Prostate gland (tissue), 2 donors: ENCODE measurements at regions of chr1 and their contacts with region 1.

Region 1: DNA sequence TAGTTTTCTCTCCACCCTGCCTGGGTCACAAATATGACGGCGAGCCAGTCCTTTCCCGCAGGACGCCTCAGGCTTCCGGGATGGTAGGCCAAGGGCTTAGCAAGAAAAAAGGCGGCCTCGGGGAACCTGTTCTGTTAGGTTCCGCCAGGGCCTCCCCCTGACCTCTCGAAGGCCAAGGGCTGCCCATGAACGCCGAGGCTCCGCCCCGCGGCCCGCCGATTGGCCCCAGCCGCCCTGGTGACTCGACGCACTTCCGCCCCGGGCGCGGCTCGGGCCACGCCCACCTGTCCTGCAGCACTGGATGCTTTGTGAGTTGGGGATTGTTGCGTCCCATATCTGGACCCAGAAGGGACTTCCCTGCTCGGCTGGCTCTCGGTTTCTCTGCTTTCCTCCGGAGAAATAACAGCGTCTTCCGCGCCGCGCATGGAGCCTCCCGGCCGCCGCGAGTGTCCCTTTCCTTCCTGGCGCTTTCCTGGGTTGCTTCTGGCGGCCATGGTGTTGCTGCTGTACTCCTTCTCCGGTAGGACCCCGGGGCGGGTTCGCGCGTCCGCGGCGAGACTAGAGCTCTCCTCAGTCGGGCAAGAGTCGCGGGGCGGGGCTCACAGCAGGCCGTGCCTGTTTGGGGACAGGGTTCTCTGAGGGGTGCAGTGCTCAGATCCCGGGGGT is at the start of gene CD46:
- DNase-seq: peak; percentile 98
- H3K4me3 ChIP-seq: peak within 1 kb of the TSS; percentile 73 to 95
- H3K27ac ChIP-seq: peak within 1 kb of the TSS; percentile 95 to 97
- H3K4me1 ChIP-seq: peaks cover 6% of the 10 kb centered on the region
- H3K27me3 ChIP-seq: no peaks in the 10 kb centered on the region
- CTCF ChIP-seq: peak in 2 of 4 experiments; percentile 25 to 28
- POLR2A ChIP-seq: peak; percentile 98
- total RNA-seq, gene CD46: 173 to 327 TPM

Region 2: GRCh38 chr1:207789792-207790787 is 38.2 kb after region 1 on chr1:
- intact Hi-C with region 1: loop called (anchors 5 kb)
- DNase-seq: no peak
- H3K4me3 ChIP-seq: no peak overlapping the region
- H3K27ac ChIP-seq: peak overlapping the region; percentile 82 to 83
- H3K4me1 ChIP-seq: peaks cover 14% of the 10 kb centered on the region
- H3K27me3 ChIP-seq: no peaks in the 10 kb centered on the region
- CTCF ChIP-seq: no peak
- POLR2A ChIP-seq: no peak

Region 3: GRCh38 chr1:208207388-208208131 is 455.6 kb after region 1 on chr1:
- intact Hi-C with region 1: no loop called
- DNase-seq: peak; percentile 77
- H3K4me3 ChIP-seq: no peak overlapping the region
- H3K27ac ChIP-seq: peak overlapping the region; percentile 47 to 58
- H3K4me1 ChIP-seq: peaks cover 14% of the 10 kb centered on the region
- H3K27me3 ChIP-seq: no peaks in the 10 kb centered on the region
- CTCF ChIP-seq: no peak
- POLR2A ChIP-seq: no peak

Region 4: GRCh38 chr1:208347191-208347590 is 595.3 kb after region 1 on chr1:
- intact Hi-C with region 1: no loop called
- DNase-seq: no peak
- H3K4me3 ChIP-seq: no peak overlapping the region
- H3K27ac ChIP-seq: no peak overlapping the region
- H3K4me1 ChIP-seq: no peaks in the 10 kb centered on the region
- H3K27me3 ChIP-seq: no peaks in the 10 kb centered on the region
- CTCF ChIP-seq: no peak
- POLR2A ChIP-seq: no peak